H1 (cell line): ENCODE measurements at regions of chr9 and their contacts with region 1.

Region 1: GRCh38 chr9:92716557-92716956 is 46.6 kb upstream of the IPPK start:
- DNase-seq: peak; percentile 17 to 100
- H3K4me3 ChIP-seq: no peak overlapping the region
- H3K27ac ChIP-seq: no peak overlapping the region
- H3K4me1 ChIP-seq: no peaks in the 10 kb centered on the region
- H3K27me3 ChIP-seq: no peaks in the 10 kb centered on the region
- CTCF ChIP-seq: peak in 2 of 3 experiments; percentile 91; a peak in 3 of 4 replicates
- EP300 ChIP-seq: no peak
- POLR2A ChIP-seq: no peak
- RAD21 ChIP-seq: peak; percentile 89 to 91

Region 2: GRCh38 chr9:92728831-92729734 is 12.5 kb after region 1 on chr9:
- CTCF ChIA-PET with region 1: interaction called, 98 read pairs
- POLR2A ChIA-PET with region 1: interaction called, 3 read pairs
- DNase-seq: peak in 1 of 2 experiments; percentile 39
- H3K4me3 ChIP-seq: no peak overlapping the region
- H3K27ac ChIP-seq: no peak overlapping the region
- H3K4me1 ChIP-seq: peaks cover 0 to 1% (median 0%) of the 10 kb centered on the region in 4 experiments; a peak in 1 of 7 replicates
- H3K27me3 ChIP-seq: no peaks in the 10 kb centered on the region
- CTCF ChIP-seq: peak; percentile 64 to 66 (median 66)
- EP300 ChIP-seq: no peak
- POLR2A ChIP-seq: no peak
- RAD21 ChIP-seq: peak; percentile 65 to 69

Region 3: DNA sequence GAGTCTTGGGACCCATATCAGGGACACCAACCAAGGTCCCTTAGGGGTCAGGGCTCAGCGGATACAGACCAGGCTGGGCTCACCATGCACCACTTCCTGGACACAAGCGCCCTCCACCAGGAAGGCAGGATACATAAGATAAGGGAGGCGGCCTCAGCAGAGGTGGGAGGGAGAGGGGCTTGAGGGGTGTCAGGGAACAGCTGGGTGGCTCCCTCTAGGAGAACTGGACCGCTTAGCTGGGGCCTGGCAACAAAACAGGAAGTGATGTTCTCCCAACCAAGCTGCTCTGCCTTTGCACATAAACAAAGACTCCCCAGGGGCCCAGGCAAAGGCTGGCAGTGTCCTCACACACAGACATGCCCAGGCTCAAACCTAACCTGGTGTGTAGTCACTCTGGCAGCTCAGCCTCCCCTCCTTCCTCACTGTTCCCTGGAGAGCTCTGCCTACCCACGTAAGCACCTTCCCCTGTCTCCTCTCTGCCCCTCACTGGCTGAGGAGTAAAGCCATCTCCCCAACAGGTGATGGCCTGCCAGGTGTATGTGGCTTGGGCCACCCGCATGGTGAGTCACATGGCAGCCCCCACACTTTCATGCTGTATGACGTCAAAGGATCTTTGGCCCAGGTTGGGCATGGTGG is 53.9 kb after region 1 on chr9:
- CTCF ChIA-PET with region 1: interaction called, 16 read pairs
- POLR2A ChIA-PET with region 1: no interaction called
- DNase-seq: no peak
- H3K4me3 ChIP-seq: no peak overlapping the region
- H3K27ac ChIP-seq: peak overlapping the region; percentile 38; the same call in 1 of the 2 replicates
- H3K4me1 ChIP-seq: peaks cover 0 to 11% (median 3%) of the 10 kb centered on the region in 4 experiments; a peak in 3 of 7 replicates
- H3K27me3 ChIP-seq: no peaks in the 10 kb centered on the region
- CTCF ChIP-seq: no peak
- EP300 ChIP-seq: no peak
- POLR2A ChIP-seq: peak in 1 of 2 experiments; percentile 51; a peak in 1 of 3 replicates
- RAD21 ChIP-seq: no peak

Region 4: GRCh38 chr9:92790542-92791527 is 74.3 kb after region 1 on chr9:
- CTCF ChIA-PET with region 1: interaction called, 236 read pairs
- POLR2A ChIA-PET with region 1: no interaction called
- DNase-seq: peak in 1 of 2 experiments; percentile 87
- H3K4me3 ChIP-seq: no peak overlapping the region
- H3K27ac ChIP-seq: no peak overlapping the region
- H3K4me1 ChIP-seq: peaks cover 0 to 2% (median 0%) of the 10 kb centered on the region in 4 experiments; a peak in 1 of 7 replicates
- H3K27me3 ChIP-seq: no peaks in the 10 kb centered on the region
- CTCF ChIP-seq: peak; percentile 65 to 90 (median 86)
- EP300 ChIP-seq: no peak
- POLR2A ChIP-seq: no peak
- RAD21 ChIP-seq: peak; percentile 94 to 97

Region 5: GRCh38 chr9:92808726-92809451 is 92.3 kb after region 1 on chr9:
- CTCF ChIA-PET with region 1: interaction called, 12 read pairs
- POLR2A ChIA-PET with region 1: no interaction called
- DNase-seq: peak; percentile 53 to 88
- H3K4me3 ChIP-seq: peak overlapping the region; percentile 18 to 63 (median 44)
- H3K27ac ChIP-seq: no peak overlapping the region
- H3K4me1 ChIP-seq: peaks cover 0 to 10% (median 5%) of the 10 kb centered on the region in 4 experiments; a peak in 5 of 7 replicates
- H3K27me3 ChIP-seq: peaks cover 32 to 60% (median 54%) of the 10 kb centered on the region in 4 experiments
- CTCF ChIP-seq: peak; percentile 34 to 36 (median 35); a peak in 3 of 4 replicates
- EP300 ChIP-seq: no peak
- POLR2A ChIP-seq: no peak
- RAD21 ChIP-seq: peak; percentile 19 to 36; a peak in 2 of 4 replicates

Region 6: GRCh38 chr9:92970467-92970923 is 253.9 kb after region 1 on chr9:
- CTCF ChIA-PET with region 1: no interaction called
- POLR2A ChIA-PET with region 1: no interaction called
- DNase-seq: peak; percentile 55 to 72
- H3K4me3 ChIP-seq: no peak overlapping the region
- H3K27ac ChIP-seq: peak overlapping the region; percentile 71
- H3K4me1 ChIP-seq: peaks cover 16 to 37% (median 22%) of the 10 kb centered on the region in 4 experiments
- H3K27me3 ChIP-seq: no peaks in the 10 kb centered on the region; a peak in 1 of 7 replicates
- CTCF ChIP-seq: no peak
- EP300 ChIP-seq: no peak
- POLR2A ChIP-seq: no peak
- RAD21 ChIP-seq: no peak